Prostate gland (tissue), 2 donors: ENCODE measurements at regions of chrX and their contacts with region 1.

Region 1: DNA sequence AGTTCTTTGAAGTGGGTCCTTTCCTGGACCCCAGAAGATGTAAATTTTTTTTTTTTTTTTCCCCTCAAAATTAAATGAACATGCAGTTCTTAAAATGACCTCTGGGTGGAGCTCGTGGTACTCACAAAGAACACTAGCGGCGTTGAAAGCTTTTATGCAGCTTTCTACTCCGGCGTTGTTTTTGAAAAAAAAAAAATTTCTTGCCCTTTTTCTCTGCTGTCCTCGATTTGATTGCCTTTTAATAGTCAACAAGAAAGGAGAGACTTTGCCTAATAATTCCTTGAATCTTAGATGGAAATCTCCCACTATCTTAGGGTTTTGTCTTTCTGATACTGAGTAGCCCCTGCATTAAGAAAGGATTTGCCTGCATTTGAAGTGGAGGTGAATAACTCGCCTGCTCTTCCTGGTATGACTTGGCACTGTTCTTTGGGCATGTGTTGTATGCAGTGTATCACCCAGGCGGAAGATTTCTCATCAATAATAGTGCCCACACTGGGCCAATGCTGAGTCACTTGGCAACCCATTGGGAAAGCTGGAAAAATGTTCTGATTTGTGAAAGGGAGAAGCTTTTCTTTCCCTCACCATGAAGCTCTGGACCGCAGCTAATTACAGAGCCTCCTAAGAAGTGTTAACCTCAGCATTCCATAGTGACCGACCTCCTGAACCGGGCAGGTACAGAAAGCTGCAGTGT is 104.0 kb downstream of the PHEX start:
- DNase-seq: peak; percentile 25
- H3K4me3 ChIP-seq: no peak overlapping the region
- H3K27ac ChIP-seq: peak overlapping the region; percentile 41 to 45
- H3K4me1 ChIP-seq: no peaks in the 10 kb centered on the region
- H3K27me3 ChIP-seq: no peaks in the 10 kb centered on the region
- CTCF ChIP-seq: peak; percentile 42 to 62 (median 56)
- POLR2A ChIP-seq: no peak

Region 2: DNA sequence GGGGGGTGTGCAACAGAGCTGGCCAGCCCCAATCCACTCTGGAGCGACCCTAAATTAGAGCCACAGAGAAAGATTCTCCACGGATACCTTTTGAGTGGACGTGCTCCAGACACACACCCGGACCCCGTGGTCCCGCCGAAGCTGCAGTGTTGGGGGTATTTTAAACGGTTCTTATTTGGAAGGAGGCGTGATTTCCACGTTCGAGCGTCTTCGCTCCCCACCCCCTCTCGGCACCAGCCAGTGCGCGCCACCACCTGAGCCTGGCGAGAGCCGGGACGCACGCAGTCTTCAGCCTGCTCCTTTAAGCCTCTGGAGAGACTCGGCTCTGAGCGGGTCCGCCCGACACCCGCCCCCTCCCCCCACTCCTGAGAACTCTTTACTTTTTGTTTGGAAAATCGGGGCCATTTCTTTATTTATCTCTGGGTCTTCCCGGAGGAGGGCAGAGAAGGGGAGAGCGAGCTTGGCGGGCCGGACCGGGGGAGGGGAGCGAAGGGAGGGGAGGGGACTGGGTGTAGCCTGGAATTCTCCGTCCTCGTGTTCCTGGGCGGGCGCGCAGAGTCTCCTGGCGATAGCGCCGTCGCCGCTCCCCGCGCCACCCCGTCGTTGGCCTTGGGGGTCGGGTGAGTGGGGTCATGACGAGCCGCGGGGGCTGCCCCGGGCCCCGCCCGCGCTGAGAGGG is 1197.8 kb after region 1 on chrX:
- intact Hi-C with region 1: loop called (anchors 10 kb)
- DNase-seq: peak; percentile 12
- H3K4me3 ChIP-seq: peak overlapping the region; percentile 25 to 29
- H3K27ac ChIP-seq: peak overlapping the region in 1 of 2 donors; percentile 30
- H3K4me1 ChIP-seq: no peaks in the 10 kb centered on the region
- H3K27me3 ChIP-seq: no peaks in the 10 kb centered on the region
- CTCF ChIP-seq: no peak
- POLR2A ChIP-seq: no peak